ENCODE measurements at regions of chr18 and their contacts with region 1.

Region 1: GRCh38 chr18:44758861-44759631 is 78.4 kb downstream of the SETBP1 start:
- H3K4me3 Mint-ChIP-seq: peak overlapping the region; percentile 54
- H3K27ac Mint-ChIP-seq: peak overlapping the region; percentile 75
- H3K4me1 Mint-ChIP-seq: peaks cover 26% of the 10 kb centered on the region
- H3K27me3 Mint-ChIP-seq: peaks cover 48% of the 10 kb centered on the region

Region 2: GRCh38 chr18:44518091-44518615 is 240.9 kb before region 1 on chr18:
- intact Hi-C with region 1: loop called (anchors 10 kb)
- H3K4me3 Mint-ChIP-seq: no peak overlapping the region
- H3K27ac Mint-ChIP-seq: no peak overlapping the region
- H3K4me1 Mint-ChIP-seq: peaks cover 19% of the 10 kb centered on the region
- H3K27me3 Mint-ChIP-seq: no peaks in the 10 kb centered on the region

Region 3: DNA sequence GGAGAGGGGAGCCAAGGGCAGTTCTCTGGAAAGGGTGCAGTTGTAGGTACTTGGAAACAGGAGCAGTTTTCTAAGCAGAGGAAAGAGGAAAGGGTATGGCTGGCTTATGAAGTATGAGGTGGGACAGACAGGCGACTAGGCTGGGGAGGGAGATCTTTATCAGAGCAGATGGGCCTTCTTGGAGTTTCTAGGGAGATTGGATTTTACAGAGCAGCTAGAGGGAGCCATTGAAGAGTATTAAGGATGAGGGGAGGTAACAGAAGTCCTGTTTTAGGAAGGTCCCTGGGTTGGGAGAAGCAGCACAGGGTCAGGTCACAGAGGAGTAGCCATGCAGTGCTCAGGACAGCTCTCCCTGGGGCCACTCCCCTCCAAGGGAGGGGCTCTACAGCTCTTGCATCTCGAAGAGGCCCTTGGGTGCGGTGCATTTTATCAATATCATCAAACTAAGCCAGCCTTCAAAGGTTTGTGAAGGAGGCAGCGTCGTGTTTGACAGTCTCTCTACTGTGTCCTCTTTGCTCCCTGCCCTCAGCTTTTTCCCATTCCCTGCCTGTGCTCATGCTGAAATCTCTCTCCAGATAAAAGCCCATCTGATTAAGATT is 75.9 kb after region 1 on chr18:
- intact Hi-C with region 1: loop called (anchors 5 kb)
- H3K4me3 Mint-ChIP-seq: no peak overlapping the region
- H3K27ac Mint-ChIP-seq: no peak overlapping the region
- H3K4me1 Mint-ChIP-seq: peaks cover 22% of the 10 kb centered on the region
- H3K27me3 Mint-ChIP-seq: peaks cover 42% of the 10 kb centered on the region

Region 4: GRCh38 chr18:45136381-45137086 is 377.5 kb after region 1 on chr18:
- intact Hi-C with region 1: no loop called
- H3K4me3 Mint-ChIP-seq: no peak overlapping the region
- H3K27ac Mint-ChIP-seq: no peak overlapping the region
- H3K4me1 Mint-ChIP-seq: no peaks in the 10 kb centered on the region
- H3K27me3 Mint-ChIP-seq: no peaks in the 10 kb centered on the region